ENCODE measurements at regions of chr11 and their contacts with region 1.

Region 1: DNA sequence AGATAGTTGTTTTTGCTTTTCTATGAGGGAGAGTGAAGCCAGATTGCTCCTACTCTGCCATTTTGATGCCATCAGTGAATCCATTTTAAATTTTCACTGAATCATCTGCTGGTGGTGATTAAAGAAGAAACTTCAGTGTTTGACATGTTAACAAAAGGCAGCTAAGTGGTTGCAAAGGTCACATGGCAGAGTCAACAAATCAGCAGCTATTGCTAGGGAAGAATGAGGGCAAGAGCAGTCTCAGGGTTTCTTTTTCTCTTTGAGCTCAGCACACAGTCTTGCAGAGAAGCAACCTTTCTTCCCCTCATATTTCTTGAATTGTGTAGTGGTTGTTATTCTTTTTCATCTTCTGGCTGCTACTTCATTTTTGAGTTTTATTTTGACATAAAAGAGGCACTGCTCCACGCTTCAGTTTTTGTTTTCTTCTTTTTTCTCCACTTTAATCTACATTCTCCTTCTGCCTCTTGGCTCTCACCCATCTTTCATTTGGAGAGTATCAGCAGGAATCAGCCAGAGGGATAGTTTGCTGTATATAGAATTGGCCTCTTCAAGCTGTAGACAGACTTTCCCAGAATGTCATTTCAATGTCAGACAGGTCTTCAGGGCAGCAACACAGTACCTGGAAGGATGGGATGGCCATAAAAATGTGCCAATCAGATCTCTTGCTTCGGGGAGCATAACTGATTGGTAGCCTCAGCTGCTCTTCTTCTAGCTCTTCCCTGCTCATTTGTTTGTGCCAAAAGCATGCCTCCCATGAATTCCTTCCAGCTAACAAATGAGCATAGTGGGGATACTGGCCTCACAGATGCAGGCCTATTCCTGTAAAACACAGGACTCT is 153.9 kb downstream of the TRPC6 start:
- DNase-seq: no peak
- H3K4me3 ChIP-seq: no peak overlapping the region
- H3K27me3 ChIP-seq: peaks cover 2% of the 10 kb centered on the region; the same call in 1 of the 2 replicates
- CTCF ChIP-seq: no peak

Region 2: DNA sequence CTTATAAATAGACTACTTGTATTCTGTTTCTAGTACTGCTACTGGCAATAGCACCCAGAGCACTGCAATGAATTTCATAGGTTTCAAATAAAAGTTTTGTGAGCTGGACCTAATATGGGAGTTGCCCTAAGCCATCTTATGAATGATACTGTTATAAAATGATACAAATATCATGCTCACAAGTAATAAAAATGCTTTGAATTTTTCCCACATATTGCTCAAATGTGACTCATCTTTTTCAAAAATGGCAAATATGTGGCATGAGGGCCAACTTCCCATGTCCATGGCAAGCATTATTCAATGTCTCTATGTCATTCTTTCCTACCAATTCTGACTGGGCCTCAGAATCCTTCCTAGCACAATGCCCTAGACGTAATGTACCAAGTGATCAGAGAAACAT is 16.3 kb after region 1 on chr11:
- CTCF ChIA-PET with region 1: interaction called, 12 read pairs
- POLR2A ChIA-PET with region 1: no interaction called
- DNase-seq: peak; percentile 81
- H3K4me3 ChIP-seq: no peak overlapping the region
- H3K27me3 ChIP-seq: no peaks in the 10 kb centered on the region
- CTCF ChIP-seq: no peak